ENCODE measurements at regions of chr19 and their contacts with region 1.

Region 1: GRCh38 chr19:55301459-55302317 is 17.9 kb downstream of the BRSK1 start:
- DNase-seq: peak; percentile 96

Region 2: DNA sequence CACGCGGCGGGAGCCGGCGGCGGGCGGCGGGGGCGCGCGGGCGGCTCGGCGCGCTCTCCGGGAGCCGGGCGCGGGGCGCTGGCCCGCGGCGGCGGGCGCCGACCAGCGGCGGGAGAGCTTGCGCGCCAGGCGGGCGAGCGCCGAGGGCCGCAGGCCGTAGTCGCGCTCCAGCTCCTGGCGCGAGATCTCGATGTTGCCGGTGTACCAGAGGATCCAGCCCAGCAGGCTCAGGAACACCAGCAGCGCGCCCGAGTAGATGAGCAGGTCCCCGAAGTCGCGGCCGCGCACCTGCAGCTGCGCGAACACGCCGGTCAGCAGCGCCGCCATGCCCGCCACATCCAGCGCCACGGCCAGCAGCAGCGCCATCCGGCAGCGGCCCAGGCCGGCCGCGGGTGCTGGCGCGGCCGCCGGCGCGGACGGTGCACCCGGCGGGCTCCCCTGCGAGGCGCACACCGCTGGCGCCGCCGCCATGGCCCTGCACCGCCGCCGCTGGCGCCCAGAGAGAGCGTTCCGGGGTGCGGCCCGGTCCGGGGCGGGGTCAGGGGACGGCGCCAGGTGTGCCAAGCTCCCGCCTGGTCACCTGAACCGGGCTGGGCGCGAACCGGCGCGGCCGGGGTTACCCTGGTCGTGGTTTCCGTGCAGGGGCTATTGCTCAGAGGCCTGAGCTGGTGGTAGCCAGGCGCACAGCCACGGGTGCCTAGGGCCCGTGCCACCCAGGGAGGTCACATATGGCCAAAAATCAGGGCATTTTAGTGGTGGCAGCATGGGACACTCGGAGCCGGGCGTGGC is 82.3 kb after region 1 on chr19 and contains the start of gene TMEM238:
- intact Hi-C with region 1: loop called in 1 of 2 experiments (anchors 5 kb)
- DNase-seq: peak; percentile 87
- total RNA-seq, gene TMEM238: 0.69 to 0.90 TPM

Measured in posterior vena cava (tissue), 2 donors.